Natural killer cell (primary cell): ENCODE measurements at regions of chr22 and their contacts with region 1.

Region 1: GRCh38 chr22:41832553-41833368 is at the start of gene SREBF2:
- DNase-seq: peak; percentile 97 to 99
- ATAC-seq: peak; percentile 91 to 97 (median 92)
- H3K4me3 ChIP-seq: peak within 1 kb of the TSS; percentile 99
- H3K4me3 Mint-ChIP-seq: peak within 1 kb of the TSS; percentile 95
- H3K27ac ChIP-seq: peak within 1 kb of the TSS; percentile 100
- H3K27ac Mint-ChIP-seq: peak within 1 kb of the TSS; percentile 99
- H3K4me1 ChIP-seq: peaks cover 13% of the 10 kb centered on the region
- H3K4me1 Mint-ChIP-seq: peaks cover 32 to 41% of the 10 kb centered on the region in 2 donors
- H3K27me3 ChIP-seq: no peaks in the 10 kb centered on the region
- H3K27me3 Mint-ChIP-seq: no peaks in the 10 kb centered on the region
- CTCF ChIP-seq: no peak
- total RNA-seq, gene SREBF2: 101 to 106 (median 105) TPM

Region 2: GRCh38 chr22:41780746-41781505 is 51.8 kb before region 1 on chr22:
- intact Hi-C with region 1: loop called (anchors 2 kb)
- DNase-seq: peak; percentile 82 to 98
- ATAC-seq: peak; percentile 92 to 99 (median 95)
- H3K4me3 ChIP-seq: peak overlapping the region; percentile 58
- H3K4me3 Mint-ChIP-seq: peak overlapping the region; percentile 82
- H3K27ac ChIP-seq: peak overlapping the region; percentile 96
- H3K27ac Mint-ChIP-seq: peak overlapping the region; percentile 98 to 99
- H3K4me1 ChIP-seq: peaks cover 36% of the 10 kb centered on the region
- H3K4me1 Mint-ChIP-seq: peaks cover 41 to 43% of the 10 kb centered on the region in 2 donors
- H3K27me3 ChIP-seq: no peaks in the 10 kb centered on the region
- H3K27me3 Mint-ChIP-seq: no peaks in the 10 kb centered on the region
- CTCF ChIP-seq: no peak

Region 3: GRCh38 chr22:41946629-41947423 is 114.1 kb after region 1 on chr22 and contains the start of gene CENPM:
- intact Hi-C with region 1: loop called (anchors 2 kb)
- DNase-seq: peak; percentile 82 to 89
- ATAC-seq: peak; percentile 93 to 94 (median 94)
- H3K4me3 ChIP-seq: peak within 1 kb of the TSS; percentile 63
- H3K4me3 Mint-ChIP-seq: peak within 1 kb of the TSS; percentile 89
- H3K27ac ChIP-seq: peak within 1 kb of the TSS; percentile 36
- H3K27ac Mint-ChIP-seq: peak within 1 kb of the TSS; percentile 36 to 76
- H3K4me1 ChIP-seq: peaks cover 21% of the 10 kb centered on the region
- H3K4me1 Mint-ChIP-seq: peaks cover 8 to 17% of the 10 kb centered on the region in 2 donors
- H3K27me3 ChIP-seq: no peaks in the 10 kb centered on the region
- H3K27me3 Mint-ChIP-seq: no peaks in the 10 kb centered on the region
- CTCF ChIP-seq: no peak
- total RNA-seq, gene CENPM: 4.2 to 7.1 (median 6.1) TPM

Region 4: DNA sequence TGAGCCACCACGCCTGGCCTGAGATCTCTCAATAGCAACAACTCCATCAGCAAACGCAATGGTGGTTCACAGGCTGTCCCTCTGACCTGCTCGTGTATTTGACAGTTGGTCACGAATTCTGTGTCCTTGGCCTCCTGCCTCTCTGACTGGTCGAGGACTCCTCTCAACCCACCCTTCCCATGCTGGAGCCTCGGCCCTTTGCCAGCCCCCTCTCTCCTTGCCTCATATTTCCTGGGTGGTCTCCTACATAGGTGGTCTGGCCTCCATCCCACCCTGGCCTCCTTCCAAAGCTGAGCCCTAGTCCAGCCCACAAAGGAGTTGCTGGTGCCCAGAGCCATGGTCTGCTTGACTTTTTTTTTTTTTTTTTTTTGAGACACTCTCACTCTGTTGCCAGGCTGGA is 899.3 kb after region 1 on chr22:
- intact Hi-C with region 1: no loop called
- DNase-seq: no peak
- ATAC-seq: no peak
- H3K4me3 ChIP-seq: no peak overlapping the region
- H3K4me3 Mint-ChIP-seq: no peak overlapping the region
- H3K27ac ChIP-seq: no peak overlapping the region
- H3K27ac Mint-ChIP-seq: no peak overlapping the region
- H3K4me1 ChIP-seq: no peaks in the 10 kb centered on the region
- H3K4me1 Mint-ChIP-seq: no peaks in the 10 kb centered on the region
- H3K27me3 ChIP-seq: no peaks in the 10 kb centered on the region
- H3K27me3 Mint-ChIP-seq: peaks cover 6 to 17% of the 10 kb centered on the region in 2 donors
- CTCF ChIP-seq: no peak